Left cardiac atrium (tissue), 4 donors: ENCODE measurements at regions of chr1 and their contacts with region 1.

Region 1: DNA sequence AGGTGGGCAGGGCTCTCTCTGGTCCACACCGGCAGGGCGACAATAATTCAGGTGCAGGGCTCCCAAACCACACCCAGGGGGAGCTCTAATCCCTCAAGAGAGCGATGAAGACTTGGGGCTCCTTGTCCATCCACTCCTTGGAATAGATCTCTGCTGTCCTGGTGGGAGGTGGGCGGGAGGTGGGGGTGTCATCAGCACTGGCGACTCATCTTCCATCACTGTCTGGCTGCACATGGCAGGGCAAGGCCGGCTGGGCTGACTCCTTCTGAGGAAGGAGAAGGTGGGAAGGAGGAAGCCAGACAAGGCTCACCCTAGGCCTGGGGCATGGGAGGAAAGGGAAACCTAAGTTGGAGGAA is 29.3 kb downstream of the TNNT2 start:
- DNase-seq: peak; percentile 8
- ATAC-seq: peak in 1 of 2 donors; percentile 59

Region 2: DNA sequence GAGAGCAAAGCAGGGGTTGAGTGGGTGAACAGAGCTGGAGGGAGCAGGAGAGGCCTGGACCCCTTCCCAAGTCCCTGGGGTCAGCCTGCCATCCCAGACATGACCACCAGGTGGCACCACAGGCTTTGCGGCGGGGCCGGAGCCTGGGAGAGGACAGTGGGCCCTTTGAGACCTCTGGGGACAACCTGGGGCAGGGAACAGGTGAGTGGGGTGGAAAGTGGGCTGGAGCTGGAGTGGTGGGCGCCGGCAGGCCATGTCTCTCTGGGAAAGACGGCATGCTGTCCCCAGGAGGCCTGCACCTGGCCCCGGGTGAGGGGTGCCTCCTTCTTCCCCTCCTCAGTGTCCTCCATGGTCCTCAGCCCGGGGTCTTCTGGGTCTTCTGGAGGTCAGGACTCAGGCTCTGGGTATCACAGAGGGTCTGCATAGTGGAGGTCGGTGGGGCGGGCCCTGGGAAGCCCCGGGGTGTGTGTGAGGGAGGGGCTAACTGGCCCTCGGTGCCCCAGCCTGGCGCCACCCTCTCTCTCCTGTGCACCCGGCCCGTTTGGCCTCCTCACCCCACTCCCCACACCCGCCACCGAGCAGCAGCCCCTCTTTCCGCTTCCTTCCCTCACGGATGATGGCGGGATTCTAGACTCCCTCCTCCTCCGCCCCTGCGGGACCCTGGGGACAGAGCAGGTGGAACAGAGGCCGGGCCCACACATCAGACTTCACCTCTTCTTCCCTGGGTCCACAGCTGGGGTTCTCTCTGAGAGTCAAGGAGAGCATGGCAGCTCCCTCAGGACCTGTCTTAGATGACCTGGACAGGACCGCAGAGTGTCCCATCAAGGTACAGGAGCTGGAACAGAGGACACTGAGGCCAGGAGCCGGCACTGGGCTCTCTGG is 93.3 kb before region 1 on chr1:
- intact Hi-C with region 1: loop called (anchors 2 to 5 kb)
- DNase-seq: peak; percentile 57
- ATAC-seq: peak; percentile 67 to 77